OCI-LY7 (cell line): ENCODE measurements at regions of chr2 and their contacts with region 1.

Region 1: DNA sequence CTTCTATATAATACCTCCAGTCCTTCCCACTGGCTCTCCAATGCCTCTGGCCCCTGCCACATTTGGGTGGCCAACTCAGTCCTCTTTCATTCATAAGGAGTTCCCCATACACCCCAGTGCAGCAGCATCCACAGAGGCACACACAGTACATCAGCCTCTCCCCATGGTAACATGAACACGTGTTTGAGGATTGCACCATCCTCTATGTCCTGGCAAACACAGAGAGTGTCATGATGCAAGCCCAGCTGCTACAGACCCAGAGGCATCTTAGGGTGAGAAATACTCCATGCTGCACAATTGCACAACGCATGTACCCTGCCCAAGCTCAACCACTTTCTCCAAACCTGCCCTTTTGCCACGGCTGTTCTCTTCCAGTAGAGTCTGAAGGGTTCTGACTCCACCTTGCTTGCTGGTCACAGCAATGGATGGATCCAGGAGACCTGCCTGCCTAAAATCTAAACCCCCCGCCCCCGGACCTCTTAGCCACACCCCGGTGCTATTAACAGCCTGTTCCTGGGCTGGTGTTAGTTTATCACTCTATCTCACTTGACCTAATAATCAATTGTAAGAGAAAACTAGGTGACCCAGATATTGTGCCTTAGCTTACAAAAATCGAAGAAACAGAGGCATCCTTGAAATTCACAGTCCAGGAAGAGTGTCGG is 11.4 kb downstream of the IGFBP5 start:
- DNase-seq: no peak
- H3K4me3 ChIP-seq: no peak overlapping the region
- H3K27ac ChIP-seq: no peak overlapping the region
- H3K4me1 ChIP-seq: no peaks in the 10 kb centered on the region
- CTCF ChIP-seq: no peak

Region 2: GRCh38 chr2:216519154-216519762 is 164.7 kb before region 1 on chr2:
- CTCF ChIA-PET with region 1: no interaction called
- POLR2A ChIA-PET with region 1: no interaction called
- intact Hi-C with region 1: no loop called
- DNase-seq: peak; percentile 68
- H3K4me3 ChIP-seq: no peak overlapping the region
- H3K27ac ChIP-seq: no peak overlapping the region
- H3K4me1 ChIP-seq: no peaks in the 10 kb centered on the region
- CTCF ChIP-seq: peak; percentile 84

Region 3: GRCh38 chr2:216829533-216829932 is 145.6 kb after region 1 on chr2:
- CTCF ChIA-PET with region 1: no interaction called
- POLR2A ChIA-PET with region 1: no interaction called
- intact Hi-C with region 1: no loop called
- DNase-seq: no peak
- H3K4me3 ChIP-seq: no peak overlapping the region
- H3K27ac ChIP-seq: no peak overlapping the region
- H3K4me1 ChIP-seq: no peaks in the 10 kb centered on the region
- CTCF ChIP-seq: no peak

Region 4: DNA sequence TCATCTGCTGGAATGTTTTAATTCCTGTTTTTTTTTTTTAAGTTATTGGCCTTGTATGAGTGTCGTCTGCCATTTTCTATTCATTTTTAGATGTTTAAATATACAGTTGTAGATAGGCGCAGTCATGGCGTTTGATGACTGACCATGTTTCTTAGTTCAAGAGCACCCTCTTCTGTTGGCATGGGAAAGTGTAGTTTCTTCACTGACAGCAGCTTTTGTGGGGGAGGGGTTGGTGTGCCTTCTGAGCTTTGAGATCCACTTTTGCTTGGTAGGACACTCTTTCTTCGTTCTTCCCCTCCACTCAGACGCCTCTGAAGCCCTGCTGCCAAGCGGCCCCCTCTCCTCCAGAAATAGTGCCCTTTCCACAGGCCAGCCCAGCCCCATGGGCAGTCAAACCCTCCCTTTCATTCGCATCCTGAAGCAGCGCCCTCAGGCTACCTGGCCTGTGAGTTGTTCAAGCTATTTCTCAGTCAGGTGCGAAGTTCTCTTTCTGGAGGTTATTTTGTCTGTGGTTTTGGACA is 826.9 kb after region 1 on chr2:
- CTCF ChIA-PET with region 1: no interaction called
- POLR2A ChIA-PET with region 1: no interaction called
- intact Hi-C with region 1: loop called (anchors 1 kb)
- DNase-seq: peak; percentile 53
- H3K4me3 ChIP-seq: no peak overlapping the region
- H3K27ac ChIP-seq: no peak overlapping the region
- H3K4me1 ChIP-seq: no peaks in the 10 kb centered on the region
- CTCF ChIP-seq: peak; percentile 81

Region 5: GRCh38 chr2:217713395-217714286 is 1029.7 kb after region 1 on chr2:
- CTCF ChIA-PET with region 1: no interaction called
- POLR2A ChIA-PET with region 1: no interaction called
- intact Hi-C with region 1: loop called (anchors 2 kb)
- DNase-seq: peak; percentile 36
- H3K4me3 ChIP-seq: no peak overlapping the region
- H3K27ac ChIP-seq: no peak overlapping the region
- H3K4me1 ChIP-seq: no peaks in the 10 kb centered on the region
- CTCF ChIP-seq: peak; percentile 89